AG04449 (cell line): ENCODE measurements at regions of chr7 and their contacts with region 1.

Region 1: GRCh38 chr7:35891004-35891830 is 90.4 kb downstream of the SEPTIN7 start:
- DNase-seq: no peak
- H3K4me3 ChIP-seq: no peak overlapping the region
- CTCF ChIP-seq: no peak

Region 2: GRCh38 chr7:35906191-35906908 is 15.1 kb after region 1 on chr7:
- CTCF ChIA-PET with region 1: interaction called, 13 read pairs
- POLR2A ChIA-PET with region 1: no interaction called
- DNase-seq: peak; percentile 36
- H3K4me3 ChIP-seq: no peak overlapping the region
- CTCF ChIP-seq: peak; percentile 79